Activated CD4-positive, alpha-beta T cell treated with anti-CD3 and anti-CD28 coated beads, Interleukin-2, amount 10 ng/mL, durations not matched to agents 24 days and 14 days (primary cell): ENCODE measurements at regions of chr6 and their contacts with region 1.

Region 1: DNA sequence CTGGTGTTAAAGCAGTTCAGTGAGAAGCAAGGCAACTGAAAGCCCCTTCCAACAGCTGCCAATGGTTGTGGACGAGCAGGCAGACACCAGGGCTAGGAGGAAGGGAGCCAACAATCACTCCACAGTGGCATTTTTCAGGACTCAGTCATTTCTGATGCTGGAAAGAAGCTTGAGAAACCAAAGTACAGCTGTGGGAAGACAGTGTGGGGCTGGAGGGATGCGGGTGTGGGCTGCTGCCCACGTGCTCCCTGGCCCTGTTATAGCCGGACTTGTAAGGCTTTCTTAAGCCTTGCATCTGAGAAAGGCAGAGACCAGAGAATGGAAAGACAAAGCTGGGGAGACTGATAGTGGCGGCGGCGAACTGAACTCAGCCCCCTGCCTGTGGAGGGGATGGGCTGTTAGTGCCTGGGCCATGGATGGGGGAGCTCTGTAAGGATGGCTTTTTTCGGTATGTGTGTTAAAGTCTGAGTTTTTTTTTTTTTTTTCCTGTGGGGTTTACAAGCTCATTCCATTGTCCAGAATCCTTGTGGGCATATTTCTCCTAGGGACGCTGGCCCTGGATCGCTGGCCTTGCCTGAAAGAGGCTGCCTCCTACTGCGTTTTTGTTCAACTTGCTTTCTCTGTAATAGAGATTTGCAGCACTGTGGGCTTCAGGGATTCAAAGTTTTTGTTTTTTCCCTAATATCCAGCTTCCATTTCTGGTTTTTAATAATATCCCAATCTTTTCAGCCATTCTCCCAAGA is 91.7 kb downstream of the GJA10 start:
- DNase-seq: no peak
- H3K4me3 Mint-ChIP-seq: peak overlapping the region; percentile 23
- H3K27ac Mint-ChIP-seq: peak overlapping the region; percentile 83
- H3K4me1 Mint-ChIP-seq: peaks cover 59% of the 10 kb centered on the region
- H3K27me3 Mint-ChIP-seq: no peaks in the 10 kb centered on the region

Region 2: GRCh38 chr6:89887452-89888137 is 98.3 kb before region 1 on chr6:
- intact Hi-C with region 1: no loop called
- DNase-seq: no peak
- H3K4me3 Mint-ChIP-seq: no peak overlapping the region
- H3K27ac Mint-ChIP-seq: no peak overlapping the region
- H3K4me1 Mint-ChIP-seq: peaks cover 12% of the 10 kb centered on the region
- H3K27me3 Mint-ChIP-seq: peaks cover 19% of the 10 kb centered on the region

Region 3: DNA sequence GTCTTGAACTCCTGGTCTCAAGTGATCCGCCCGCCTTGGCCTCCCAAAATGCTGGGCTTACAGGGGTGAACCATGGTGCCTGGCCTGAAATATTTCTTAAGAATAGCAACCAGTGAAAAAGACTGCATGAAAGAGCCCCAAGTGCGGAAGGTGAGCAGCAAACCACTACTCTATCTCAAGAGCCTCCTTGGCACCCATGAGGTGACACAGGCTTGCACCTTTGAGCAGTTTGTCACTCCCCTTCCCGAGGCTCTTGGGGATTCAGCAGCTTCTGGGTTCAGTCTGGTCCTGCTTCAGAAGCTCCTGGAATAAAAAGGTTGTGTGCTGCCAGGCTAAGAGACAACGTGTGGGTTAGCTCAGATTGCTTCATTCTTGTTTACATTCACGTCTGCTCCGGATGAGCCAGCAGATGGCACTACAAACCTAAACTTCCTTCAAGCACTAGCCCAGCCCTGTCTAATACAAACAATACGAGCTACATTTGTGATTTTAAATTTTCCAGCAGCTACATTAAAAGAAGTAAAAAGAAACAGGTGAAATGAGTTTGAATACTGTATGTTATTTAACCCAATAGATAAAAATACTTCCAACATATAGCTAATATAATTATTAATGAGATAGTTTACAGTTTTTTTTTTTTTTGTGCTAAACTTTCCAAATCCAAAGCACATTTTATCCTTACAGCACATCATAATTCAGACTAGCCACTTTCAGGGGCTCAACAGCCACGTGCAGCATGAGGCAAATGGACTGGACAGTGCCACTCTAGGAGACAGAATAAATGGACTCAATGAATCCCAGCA is 45.5 kb before region 1 on chr6:
- intact Hi-C with region 1: loop called (anchors 2 kb)
- DNase-seq: peak; percentile 91
- H3K4me3 Mint-ChIP-seq: no peak overlapping the region
- H3K27ac Mint-ChIP-seq: peak overlapping the region; percentile 41
- H3K4me1 Mint-ChIP-seq: peaks cover 34% of the 10 kb centered on the region
- H3K27me3 Mint-ChIP-seq: no peaks in the 10 kb centered on the region

Region 4: DNA sequence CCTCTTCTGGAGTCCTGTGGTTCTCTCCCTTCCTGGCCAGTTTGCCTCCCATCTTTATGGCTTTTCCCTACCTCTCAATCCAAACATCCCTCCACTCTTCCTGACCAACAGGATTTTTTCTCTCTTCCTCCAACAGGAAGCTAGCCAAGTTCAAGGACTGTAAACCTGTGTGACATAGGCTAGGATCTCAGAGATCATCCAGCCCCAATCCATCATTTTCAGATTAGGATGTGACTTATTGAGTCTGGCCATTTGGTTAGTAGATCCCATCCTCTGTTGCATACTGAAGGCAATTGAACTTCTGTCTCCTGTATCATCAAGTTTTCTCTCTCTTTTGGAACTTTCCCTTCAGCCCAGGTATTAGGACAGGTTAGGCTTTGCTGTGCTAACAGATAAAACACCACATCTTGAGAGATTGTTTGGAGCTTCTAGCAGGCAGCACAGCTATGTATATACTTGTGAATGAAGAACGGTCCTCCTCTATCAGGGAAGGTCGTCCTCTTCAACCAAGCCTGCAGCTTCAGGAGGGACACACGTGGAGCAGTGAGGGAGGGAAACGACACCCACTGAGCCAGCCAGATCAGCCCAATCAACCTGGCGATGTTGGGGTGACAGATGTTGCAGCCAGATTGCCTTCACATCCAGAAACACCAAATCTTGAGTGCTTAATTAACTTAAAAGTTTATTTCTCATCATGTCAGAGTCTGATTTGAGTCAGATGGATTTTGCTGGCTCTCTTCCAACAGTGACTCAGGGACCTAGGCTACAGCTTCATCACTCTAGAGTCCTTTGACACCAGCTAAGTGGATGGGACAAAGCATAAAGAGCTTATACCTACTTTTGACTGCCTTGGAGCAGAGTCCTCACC is 15.2 kb after region 1 on chr6:
- intact Hi-C with region 1: loop called (anchors 2 kb)
- DNase-seq: no peak
- H3K4me3 Mint-ChIP-seq: no peak overlapping the region
- H3K27ac Mint-ChIP-seq: no peak overlapping the region
- H3K4me1 Mint-ChIP-seq: peaks cover 12% of the 10 kb centered on the region
- H3K27me3 Mint-ChIP-seq: no peaks in the 10 kb centered on the region

Region 5: DNA sequence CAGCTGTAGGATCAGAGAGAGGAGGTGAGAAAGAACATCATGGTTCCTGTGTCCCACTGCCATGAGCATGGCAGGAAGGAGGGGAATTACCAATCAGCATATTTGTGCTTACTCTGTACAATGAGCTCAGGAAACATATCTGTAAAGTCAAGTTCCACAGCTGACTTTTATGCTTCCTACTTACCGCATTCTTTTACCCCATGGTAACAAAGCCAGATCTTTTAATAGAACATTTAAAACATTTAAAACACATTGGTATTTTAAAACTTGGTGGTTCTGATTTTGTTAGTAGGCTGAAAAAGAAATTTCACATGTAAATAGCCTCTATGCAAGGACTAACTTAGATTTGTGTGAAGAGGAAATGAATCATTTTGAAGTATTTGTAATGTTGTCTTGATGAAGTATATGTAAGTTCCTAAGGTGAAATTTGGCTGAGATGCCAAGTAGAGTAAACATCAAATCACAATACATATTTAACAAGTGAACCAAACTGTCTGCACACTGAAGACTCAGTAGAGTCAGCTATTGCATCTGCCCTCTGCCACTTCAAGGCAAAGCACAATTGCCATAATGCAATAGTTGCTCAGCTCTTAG is 23.1 kb after region 1 on chr6:
- intact Hi-C with region 1: loop called (anchors 1 kb)
- DNase-seq: peak; percentile 54
- H3K4me3 Mint-ChIP-seq: peak overlapping the region; percentile 40
- H3K27ac Mint-ChIP-seq: peak overlapping the region; percentile 85
- H3K4me1 Mint-ChIP-seq: peaks cover 33% of the 10 kb centered on the region
- H3K27me3 Mint-ChIP-seq: no peaks in the 10 kb centered on the region